ENCODE measurements at regions of chr7 and their contacts with region 1.

Region 1: GRCh38 chr7:134432296-134433152 is 26.4 kb downstream of the AKR1B1 start:
- DNase-seq: peak; percentile 71
- H3K4me3 Mint-ChIP-seq: peak overlapping the region; percentile 80
- H3K27ac Mint-ChIP-seq: peak overlapping the region; percentile 85
- H3K4me1 Mint-ChIP-seq: peaks cover 15% of the 10 kb centered on the region
- H3K27me3 Mint-ChIP-seq: peaks cover 8% of the 10 kb centered on the region

Region 2: GRCh38 chr7:134316539-134317344 is 115.8 kb before region 1 on chr7 and contains the start of gene SLC35B4:
- intact Hi-C with region 1: loop called (anchors 5 kb)
- DNase-seq: peak; percentile 91
- H3K4me3 Mint-ChIP-seq: peak within 1 kb of the TSS; percentile 88
- H3K27ac Mint-ChIP-seq: peak within 1 kb of the TSS; percentile 81
- H3K4me1 Mint-ChIP-seq: peaks cover 15% of the 10 kb centered on the region
- H3K27me3 Mint-ChIP-seq: peaks cover 8% of the 10 kb centered on the region
- total RNA-seq, gene SLC35B4: 22.8 and 23.1 TPM in 2 replicates

Region 3: DNA sequence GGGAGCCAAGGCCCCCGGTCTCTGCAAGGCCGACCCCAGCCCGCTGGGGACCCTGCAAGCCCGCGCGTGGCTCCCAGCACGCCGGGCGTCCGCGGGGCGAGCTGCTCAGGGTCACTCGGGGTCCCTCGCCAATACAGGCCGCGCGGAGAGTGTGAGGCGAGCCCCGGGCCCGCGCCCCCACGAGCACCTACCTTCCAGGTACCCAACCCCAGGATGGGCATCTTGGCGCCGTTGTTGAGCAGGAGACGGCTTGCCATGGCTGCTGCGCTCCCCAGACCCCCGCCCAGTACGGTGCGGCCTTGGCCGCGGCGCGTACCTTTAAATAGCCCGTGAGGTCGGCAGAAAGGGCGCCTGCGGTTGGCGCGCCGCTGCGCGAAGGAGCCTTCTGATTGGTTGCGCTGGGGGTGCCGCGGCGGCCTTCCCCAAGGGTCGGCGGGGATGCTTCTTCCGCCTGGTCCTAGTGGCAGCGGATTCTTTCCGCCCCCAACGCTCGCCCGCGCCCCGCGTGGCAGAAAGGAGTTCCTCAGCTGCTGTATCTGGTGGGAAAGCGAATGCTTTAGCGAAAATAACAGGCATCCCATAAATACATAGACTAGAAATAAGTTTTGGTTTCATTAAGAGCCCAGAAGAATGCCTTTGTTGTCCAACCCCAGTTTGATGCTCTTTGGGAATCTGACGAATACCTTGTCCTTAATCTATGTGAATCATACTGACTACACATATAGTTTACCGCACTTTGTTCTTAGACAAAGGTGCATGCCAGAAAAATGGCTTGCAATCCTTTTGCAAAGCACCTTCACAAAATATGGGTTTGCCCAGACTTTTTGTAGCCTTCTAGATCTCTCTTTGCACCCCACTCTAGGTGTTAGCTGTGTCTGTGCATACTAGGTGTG is 26.5 kb after region 1 on chr7 and contains the start of gene AKR1B1:
- intact Hi-C with region 1: loop called (anchors 1 kb)
- DNase-seq: peak; percentile 85
- H3K4me3 Mint-ChIP-seq: peak within 1 kb of the TSS; percentile 82
- H3K27ac Mint-ChIP-seq: peak within 1 kb of the TSS; percentile 64
- H3K4me1 Mint-ChIP-seq: peaks cover 31% of the 10 kb centered on the region
- H3K27me3 Mint-ChIP-seq: no peaks in the 10 kb centered on the region
- total RNA-seq, gene AKR1B1: 102 and 107 TPM in 2 replicates

Region 4: GRCh38 chr7:134514663-134515062 is 82.1 kb after region 1 on chr7:
- intact Hi-C with region 1: loop called (anchors 1 kb)
- DNase-seq: no peak
- H3K4me3 Mint-ChIP-seq: no peak overlapping the region
- H3K27ac Mint-ChIP-seq: no peak overlapping the region
- H3K4me1 Mint-ChIP-seq: peaks cover 7% of the 10 kb centered on the region
- H3K27me3 Mint-ChIP-seq: peaks cover 8% of the 10 kb centered on the region

Region 5: DNA sequence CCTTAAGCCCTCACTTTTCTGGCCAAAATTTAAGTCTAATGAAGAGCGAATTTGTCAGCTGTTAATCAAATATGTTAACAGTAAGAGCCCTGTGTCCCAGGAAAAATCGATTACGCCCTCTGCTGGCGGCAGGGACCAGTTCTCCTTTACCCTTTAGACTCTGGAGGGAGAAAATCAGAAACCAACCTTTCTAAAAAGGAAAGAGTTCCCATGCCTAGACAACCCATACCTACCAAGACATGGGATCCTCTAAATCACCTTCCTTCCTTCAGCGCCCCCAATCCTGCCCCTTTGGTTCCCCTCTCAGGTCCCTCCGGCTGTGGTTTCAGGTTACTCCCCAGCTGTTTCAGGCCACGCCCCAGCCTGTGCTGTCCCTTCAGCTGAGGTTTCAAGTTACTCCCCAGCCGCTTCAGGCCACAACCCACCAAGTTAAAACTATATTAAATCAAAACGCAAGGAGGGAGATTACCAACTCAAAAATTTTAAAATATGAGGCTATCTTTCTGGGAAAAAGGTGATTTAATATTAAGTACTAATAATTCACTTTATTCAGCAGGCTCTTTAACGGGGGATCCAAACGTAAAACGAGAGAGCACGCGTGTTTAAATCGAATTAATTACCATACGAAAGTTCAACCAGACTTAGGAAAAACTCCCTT is 115.0 kb after region 1 on chr7:
- intact Hi-C with region 1: loop called (anchors 1 kb)
- DNase-seq: peak; percentile 35
- H3K4me3 Mint-ChIP-seq: no peak overlapping the region
- H3K27ac Mint-ChIP-seq: no peak overlapping the region
- H3K4me1 Mint-ChIP-seq: peaks cover 6% of the 10 kb centered on the region
- H3K27me3 Mint-ChIP-seq: peaks cover 24% of the 10 kb centered on the region

Region 6: GRCh38 chr7:134605973-134606923 is 173.7 kb after region 1 on chr7:
- intact Hi-C with region 1: loop called (anchors 1 kb)
- DNase-seq: peak; percentile 40
- H3K4me3 Mint-ChIP-seq: peak overlapping the region; percentile 58
- H3K27ac Mint-ChIP-seq: no peak overlapping the region
- H3K4me1 Mint-ChIP-seq: peaks cover 4% of the 10 kb centered on the region
- H3K27me3 Mint-ChIP-seq: peaks cover 37% of the 10 kb centered on the region

Region 7: GRCh38 chr7:134986363-134987251 is 554.1 kb after region 1 on chr7 and contains the start of gene AGBL3:
- intact Hi-C with region 1: loop called (anchors 10 kb)
- DNase-seq: peak; percentile 85
- H3K4me3 Mint-ChIP-seq: peak within 1 kb of the TSS; percentile 95
- H3K27ac Mint-ChIP-seq: peak within 1 kb of the TSS; percentile 94
- H3K4me1 Mint-ChIP-seq: peaks cover 33% of the 10 kb centered on the region
- H3K27me3 Mint-ChIP-seq: no peaks in the 10 kb centered on the region
- total RNA-seq, gene AGBL3: 1.6 and 3.9 TPM in 2 replicates

Measured in activated T-helper 2 cell treated with anti-CD3 and anti-CD28 coated beads, Interferon-gamma antibody, Interleukin-2, Interleukin-4, amounts not matched to agents 10 μg/mL and 5 μg/mL and 100 μg/mL, durations not matched to agents 14 hours and 24 hours and 36 hours (primary cell).